Lower leg skin (tissue), 4 donors: ENCODE measurements at regions of chrX and their contacts with region 1.

Region 1: GRCh38 chrX:10189317-10190268 is 32.8 kb downstream of the CLCN4 start:
- DNase-seq: peak; percentile 62 to 96
- H3K4me3 ChIP-seq: no peak overlapping the region
- CTCF ChIP-seq: peak in 1 of 3 donors; percentile 10
- POLR2A ChIP-seq: no peak

Region 2: DNA sequence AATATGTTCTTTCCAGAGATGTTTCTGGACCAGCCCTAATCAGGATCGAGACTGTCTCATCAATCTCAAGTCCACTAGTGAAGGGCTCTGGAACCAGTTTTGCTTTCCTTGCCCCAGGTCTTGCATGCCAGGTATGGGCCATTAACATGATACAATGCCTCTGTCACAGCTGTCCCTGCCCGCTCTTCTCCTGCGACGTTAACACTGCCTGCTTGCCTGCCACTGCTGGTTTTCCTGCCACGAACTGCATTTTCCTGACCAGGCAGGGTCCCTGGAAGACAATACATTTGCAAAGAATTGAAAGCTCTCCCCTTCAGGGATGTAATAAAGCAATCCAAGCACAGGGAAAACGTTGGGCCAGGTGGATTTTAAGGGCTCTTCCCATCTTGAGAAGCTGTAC is 230.5 kb after region 1 on chrX:
- intact Hi-C with region 1: no loop called
- DNase-seq: no peak
- H3K4me3 ChIP-seq: no peak overlapping the region
- CTCF ChIP-seq: no peak
- POLR2A ChIP-seq: no peak

Region 3: GRCh38 chrX:10597871-10598270 is 408.3 kb after region 1 on chrX:
- intact Hi-C with region 1: loop called (anchors 2 kb)
- DNase-seq: no peak
- H3K4me3 ChIP-seq: no peak overlapping the region
- CTCF ChIP-seq: no peak
- POLR2A ChIP-seq: no peak

Region 4: GRCh38 chrX:10636337-10636736 is 446.7 kb after region 1 on chrX:
- intact Hi-C with region 1: loop called (anchors 10 kb)
- DNase-seq: peak in 1 of 2 donors; percentile 22
- H3K4me3 ChIP-seq: no peak overlapping the region
- CTCF ChIP-seq: no peak
- POLR2A ChIP-seq: no peak

Region 5: DNA sequence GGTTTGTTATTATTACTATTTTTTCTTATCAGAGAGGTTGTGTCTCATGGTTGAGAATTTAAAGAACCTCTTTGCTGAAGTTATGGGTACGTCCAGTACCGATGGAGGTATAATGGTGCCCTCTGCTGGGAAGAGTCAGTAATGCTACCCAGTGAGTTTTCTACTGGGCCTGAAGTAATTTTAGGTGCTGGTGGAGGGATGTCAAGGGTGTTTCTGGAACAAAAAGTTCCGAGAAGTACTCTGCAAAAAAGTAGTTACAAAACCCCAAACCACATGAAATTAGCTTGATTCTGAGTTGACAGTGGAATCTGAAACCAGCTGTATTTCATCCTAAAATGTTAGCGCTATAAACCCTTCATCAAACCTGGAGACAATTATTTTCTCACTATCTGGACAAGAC is 533.3 kb after region 1 on chrX:
- intact Hi-C with region 1: loop called (anchors 10 kb)
- DNase-seq: peak in 1 of 2 donors; percentile 71
- H3K4me3 ChIP-seq: no peak overlapping the region
- CTCF ChIP-seq: no peak
- POLR2A ChIP-seq: no peak

Region 6: GRCh38 chrX:11129534-11130105 is 940.0 kb after region 1 on chrX:
- intact Hi-C with region 1: loop called (anchors 5 kb)
- DNase-seq: no peak
- H3K4me3 ChIP-seq: no peak overlapping the region
- CTCF ChIP-seq: no peak
- POLR2A ChIP-seq: no peak